PC-9 (cell line): ENCODE measurements at regions of chr9 and their contacts with region 1.

Region 1: DNA sequence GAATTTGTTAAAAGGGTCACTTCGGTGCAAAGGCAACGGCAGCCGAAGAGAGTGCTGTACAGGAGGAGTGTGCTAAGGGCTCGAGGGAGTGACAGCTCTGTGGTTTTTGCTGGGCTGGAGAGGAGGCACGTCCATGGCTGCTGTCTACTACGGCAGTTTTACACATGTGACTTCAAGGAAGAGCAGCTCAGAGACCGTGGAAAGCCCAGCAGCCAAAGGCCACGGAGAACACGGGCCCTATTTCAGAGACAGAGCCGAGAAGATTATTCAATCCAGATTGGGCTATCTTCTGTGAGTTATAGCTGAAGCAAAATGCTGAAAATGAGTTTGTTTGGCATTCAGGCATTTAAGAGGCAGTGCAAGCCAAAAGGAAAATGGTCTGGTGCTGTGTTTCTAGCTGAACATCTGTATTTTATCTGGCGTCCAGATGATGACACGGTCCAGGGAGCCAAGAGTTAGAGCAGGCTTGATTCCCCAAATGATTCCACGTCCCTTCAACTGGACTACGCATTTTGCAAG is 96.4 kb downstream of the RFK start:
- DNase-seq: no peak
- H3K4me3 ChIP-seq: no peak overlapping the region
- H3K27ac ChIP-seq: no peak overlapping the region
- H3K4me1 ChIP-seq: no peaks in the 10 kb centered on the region
- H3K27me3 ChIP-seq: no peaks in the 10 kb centered on the region
- CTCF ChIP-seq: no peak

Region 2: DNA sequence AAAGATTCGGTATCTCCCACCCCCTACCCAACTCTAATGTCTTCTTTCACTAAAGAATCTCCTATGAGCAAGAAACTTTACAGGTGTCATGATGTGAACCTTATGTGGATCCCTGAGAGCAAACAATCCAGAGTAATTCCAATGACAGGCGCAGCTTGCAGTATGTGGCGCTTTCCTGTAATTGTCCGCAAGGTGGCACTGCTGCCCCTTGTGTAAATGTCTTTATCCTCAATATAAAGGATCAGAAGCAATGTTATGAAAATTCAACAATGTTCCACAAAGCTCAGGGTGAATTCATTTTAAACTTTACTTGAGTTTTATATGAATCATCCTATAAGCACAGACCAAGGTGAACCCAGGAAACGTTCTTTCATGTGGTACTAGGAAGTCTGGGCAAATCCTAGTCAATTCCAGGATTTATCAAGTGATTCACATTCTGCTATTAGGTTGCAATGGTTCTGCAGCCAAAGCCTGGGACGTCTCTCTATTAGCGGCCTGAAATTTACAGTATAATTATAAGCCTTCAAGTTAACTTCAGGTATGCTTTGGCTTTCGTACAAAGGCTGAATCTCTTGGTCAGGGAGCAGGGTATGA is 1523.8 kb before region 1 on chr9:
- CTCF ChIA-PET with region 1: no interaction called
- POLR2A ChIA-PET with region 1: no interaction called
- intact Hi-C with region 1: loop called (anchors 2 kb)
- DNase-seq: peak; percentile 46 to 70
- H3K4me3 ChIP-seq: no peak overlapping the region
- H3K27ac ChIP-seq: no peak overlapping the region
- H3K4me1 ChIP-seq: no peaks in the 10 kb centered on the region
- H3K27me3 ChIP-seq: no peaks in the 10 kb centered on the region
- CTCF ChIP-seq: peak; percentile 89

Region 3: GRCh38 chr9:75723560-75723959 is 574.2 kb before region 1 on chr9:
- CTCF ChIA-PET with region 1: no interaction called
- POLR2A ChIA-PET with region 1: no interaction called
- intact Hi-C with region 1: loop called (anchors 10 kb)
- DNase-seq: no peak
- H3K4me3 ChIP-seq: no peak overlapping the region
- H3K27ac ChIP-seq: no peak overlapping the region
- H3K4me1 ChIP-seq: no peaks in the 10 kb centered on the region
- H3K27me3 ChIP-seq: no peaks in the 10 kb centered on the region
- CTCF ChIP-seq: no peak

Region 4: DNA sequence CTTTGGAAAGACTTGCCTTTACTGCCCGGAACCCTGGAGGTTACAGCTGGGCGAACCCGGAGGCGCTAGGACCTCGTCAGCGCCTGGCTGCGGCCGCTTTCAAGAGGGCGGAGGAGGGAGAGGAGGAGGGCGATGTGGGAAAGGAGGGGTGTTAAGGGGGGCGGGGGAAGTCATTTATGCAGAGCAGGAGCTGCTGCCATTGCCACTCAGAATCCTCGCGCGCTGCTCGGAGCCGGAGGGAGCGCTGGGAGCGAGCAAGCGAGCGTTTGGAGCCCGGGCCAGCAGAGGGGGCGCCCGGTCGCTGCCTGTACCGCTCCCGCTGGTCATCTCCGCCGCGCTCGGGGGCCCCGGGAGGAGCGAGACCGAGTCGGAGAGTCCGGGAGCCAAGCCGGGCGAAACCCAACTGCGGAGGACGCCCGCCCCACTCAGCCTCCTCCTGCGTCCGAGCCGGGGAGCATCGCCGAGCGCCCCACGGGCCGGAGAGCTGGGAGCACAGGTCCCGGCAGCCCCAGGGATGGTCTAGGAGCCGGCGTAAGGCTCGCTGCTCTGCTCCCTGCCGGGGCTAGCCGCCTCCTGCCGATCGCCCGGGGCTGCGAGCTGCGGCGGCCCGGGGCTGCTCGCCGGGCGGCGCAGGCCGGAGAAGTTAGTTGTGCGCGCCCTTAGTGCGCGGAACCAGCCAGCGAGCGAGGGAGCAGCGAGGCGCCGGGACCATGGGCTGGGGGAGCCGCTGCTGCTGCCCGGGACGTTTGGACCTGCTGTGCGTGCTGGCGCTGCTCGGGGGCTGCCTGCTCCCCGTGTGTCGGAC is 407.1 kb before region 1 on chr9 and contains the start of gene PCSK5:
- CTCF ChIA-PET with region 1: no interaction called
- POLR2A ChIA-PET with region 1: no interaction called
- intact Hi-C with region 1: loop called (anchors 2 kb)
- DNase-seq: peak; percentile 88 to 89
- H3K4me3 ChIP-seq: peak within 1 kb of the TSS; percentile 76
- H3K27ac ChIP-seq: peak within 1 kb of the TSS; percentile 92
- H3K4me1 ChIP-seq: peaks cover 32% of the 10 kb centered on the region
- H3K27me3 ChIP-seq: no peaks in the 10 kb centered on the region
- CTCF ChIP-seq: peak; percentile 35; the same call in 1 of the 2 replicates
- total RNA-seq, gene PCSK5: 8.2 and 9.8 TPM in 2 replicates

Region 5: GRCh38 chr9:76216161-76216649 is 81.6 kb before region 1 on chr9:
- CTCF ChIA-PET with region 1: no interaction called
- POLR2A ChIA-PET with region 1: no interaction called
- intact Hi-C with region 1: loop called (anchors 5 kb)
- DNase-seq: peak in 1 of 2 experiments; percentile 97
- H3K4me3 ChIP-seq: no peak overlapping the region
- H3K27ac ChIP-seq: peak overlapping the region; percentile 86
- H3K4me1 ChIP-seq: peaks cover 42% of the 10 kb centered on the region
- H3K27me3 ChIP-seq: no peaks in the 10 kb centered on the region
- CTCF ChIP-seq: no peak

Region 6: GRCh38 chr9:76744336-76744735 is 446.6 kb after region 1 on chr9:
- CTCF ChIA-PET with region 1: no interaction called
- POLR2A ChIA-PET with region 1: no interaction called
- intact Hi-C with region 1: no loop called
- DNase-seq: no peak
- H3K4me3 ChIP-seq: no peak overlapping the region
- H3K27ac ChIP-seq: no peak overlapping the region
- H3K4me1 ChIP-seq: no peaks in the 10 kb centered on the region
- H3K27me3 ChIP-seq: peaks cover 52% of the 10 kb centered on the region
- CTCF ChIP-seq: no peak